ENCODE measurements at regions of chr18 and their contacts with region 1.

Region 1: GRCh38 chr18:23131693-23132319 is 3.5 kb upstream of the CABLES1 start:
- DNase-seq: peak; percentile 71 to 80
- H3K4me3 ChIP-seq: no peak overlapping the region
- H3K4me1 ChIP-seq: peaks cover 21% of the 10 kb centered on the region
- H3K27me3 ChIP-seq: no peaks in the 10 kb centered on the region

Region 2: DNA sequence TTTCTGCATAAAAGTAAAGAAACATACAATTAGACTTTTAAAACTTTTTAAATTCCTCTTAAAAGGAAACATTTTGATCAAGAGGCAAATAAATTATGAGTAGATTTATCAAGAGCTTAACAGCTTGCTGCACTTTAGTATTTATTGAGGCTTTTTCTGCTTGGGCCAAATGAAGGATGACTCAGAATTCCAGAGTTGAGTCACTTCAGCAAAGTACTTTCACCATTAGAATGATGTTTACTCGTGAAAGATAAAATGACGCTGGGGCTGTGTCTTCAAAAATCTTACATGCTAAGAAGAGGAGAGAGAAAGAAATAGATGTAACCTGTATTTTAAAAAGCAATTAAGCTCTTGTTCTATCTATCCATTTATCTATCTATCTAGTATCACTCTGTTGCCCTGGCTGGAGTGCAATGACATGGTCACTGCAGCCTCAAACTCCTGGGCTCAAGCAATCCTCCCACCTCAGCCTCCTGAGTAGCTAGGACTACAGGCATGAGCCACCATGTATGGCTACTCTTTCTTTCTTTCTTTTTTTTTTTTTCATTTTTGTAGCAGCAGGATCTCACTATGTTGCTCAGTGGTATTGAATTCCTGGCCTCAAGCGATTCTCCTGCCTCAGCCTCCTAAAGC is 246.0 kb after region 1 on chr18:
- in situ Hi-C with region 1: loop called (anchors 25 kb)
- DNase-seq: no peak
- H3K4me3 ChIP-seq: no peak overlapping the region
- H3K4me1 ChIP-seq: no peaks in the 10 kb centered on the region; the same call in 1 of the 2 replicates
- H3K27me3 ChIP-seq: no peaks in the 10 kb centered on the region